A673 (cell line): ENCODE measurements at regions of chr2 and their contacts with region 1.

Region 1: DNA sequence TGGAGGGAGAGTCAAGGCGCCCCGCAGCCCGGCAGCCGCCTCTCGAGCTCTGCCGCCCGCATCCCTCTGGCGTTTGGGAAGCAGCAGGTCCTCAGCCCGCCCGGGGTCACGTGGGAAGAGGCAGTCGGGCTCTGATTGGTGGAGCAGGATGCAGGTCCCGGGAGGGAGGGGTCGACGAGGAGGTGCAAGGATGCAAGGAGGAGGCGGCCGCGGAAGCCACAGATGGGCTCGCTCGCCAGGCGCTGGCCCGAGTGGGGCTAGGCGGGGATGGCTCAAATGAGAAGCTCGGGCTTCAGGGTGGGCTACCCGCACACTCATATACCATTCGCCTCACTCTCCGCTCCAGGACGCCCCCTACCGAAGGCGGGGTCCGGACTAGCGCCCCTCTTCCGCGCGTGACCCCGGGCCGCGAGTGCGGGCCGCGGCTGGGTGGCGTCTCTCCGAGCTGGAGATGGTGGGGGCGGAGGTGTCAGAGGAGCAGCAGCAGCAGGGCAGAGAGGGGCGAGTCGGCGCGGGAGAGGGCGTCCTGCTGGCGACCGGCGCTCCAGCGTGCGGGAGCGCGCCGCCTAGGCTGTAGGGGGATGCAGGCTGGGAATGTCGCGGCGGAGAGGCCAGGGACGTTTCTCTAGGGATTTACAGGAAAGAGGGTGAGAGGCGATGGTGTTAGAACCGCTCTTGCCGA is at the start of gene TMEFF2:
- DNase-seq: peak; percentile 96
- H3K4me3 ChIP-seq: peak within 1 kb of the TSS; percentile 85
- H3K27ac ChIP-seq: no peak within 1 kb of the TSS
- H3K4me1 ChIP-seq: peaks cover 8% of the 10 kb centered on the region
- H3K27me3 ChIP-seq: no peaks in the 10 kb centered on the region
- CTCF ChIP-seq: peak; percentile 63
- total RNA-seq, gene TMEFF2: 6.0 and 7.0 TPM in 2 replicates

Region 2: GRCh38 chr2:191352536-191352935 is 842.5 kb before region 1 on chr2:
- CTCF ChIA-PET with region 1: no interaction called
- POLR2A ChIA-PET with region 1: no interaction called
- intact Hi-C with region 1: no loop called
- DNase-seq: peak; percentile 50
- H3K4me3 ChIP-seq: no peak overlapping the region
- H3K27ac ChIP-seq: no peak overlapping the region
- H3K4me1 ChIP-seq: peaks cover 16% of the 10 kb centered on the region
- H3K27me3 ChIP-seq: no peaks in the 10 kb centered on the region
- CTCF ChIP-seq: no peak

Region 3: DNA sequence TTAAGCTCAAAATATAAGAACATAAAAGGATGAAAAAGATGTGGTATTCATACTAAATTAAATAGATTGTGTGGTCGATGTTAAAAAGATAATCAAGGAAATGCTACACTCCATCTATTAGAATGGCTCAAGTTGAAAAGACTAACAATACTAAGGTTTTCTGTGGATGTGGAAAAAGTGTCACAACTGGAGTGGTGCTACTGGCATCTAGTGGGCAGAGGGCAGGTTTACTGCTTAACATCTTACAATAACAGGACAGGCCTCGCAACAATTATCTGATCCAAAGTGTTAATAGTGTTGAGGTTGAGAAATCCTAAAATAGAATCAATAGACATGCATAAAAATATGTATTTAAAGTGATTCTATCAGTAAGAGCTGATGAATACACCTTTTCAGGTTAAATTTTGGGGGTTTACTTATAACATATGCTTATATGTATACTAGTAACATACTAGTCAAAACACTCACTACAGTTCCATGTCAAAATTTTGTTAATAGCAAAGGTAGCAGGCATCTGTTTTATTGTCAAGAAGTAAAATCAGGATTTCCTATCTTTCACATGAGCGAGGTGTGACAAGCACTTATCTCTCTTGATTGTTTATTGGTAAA is 91.2 kb after region 1 on chr2:
- CTCF ChIA-PET with region 1: no interaction called
- POLR2A ChIA-PET with region 1: no interaction called
- intact Hi-C with region 1: loop called (anchors 5 kb)
- DNase-seq: peak; percentile 75
- H3K4me3 ChIP-seq: no peak overlapping the region
- H3K27ac ChIP-seq: no peak overlapping the region
- H3K4me1 ChIP-seq: no peaks in the 10 kb centered on the region
- H3K27me3 ChIP-seq: no peaks in the 10 kb centered on the region
- CTCF ChIP-seq: peak; percentile 67

Region 4: GRCh38 chr2:192559541-192560120 is 364.6 kb after region 1 on chr2:
- CTCF ChIA-PET with region 1: no interaction called
- POLR2A ChIA-PET with region 1: no interaction called
- intact Hi-C with region 1: loop called (anchors 10 kb)
- DNase-seq: no peak
- H3K4me3 ChIP-seq: no peak overlapping the region
- H3K27ac ChIP-seq: no peak overlapping the region
- H3K4me1 ChIP-seq: no peaks in the 10 kb centered on the region
- H3K27me3 ChIP-seq: no peaks in the 10 kb centered on the region
- CTCF ChIP-seq: no peak

Region 5: DNA sequence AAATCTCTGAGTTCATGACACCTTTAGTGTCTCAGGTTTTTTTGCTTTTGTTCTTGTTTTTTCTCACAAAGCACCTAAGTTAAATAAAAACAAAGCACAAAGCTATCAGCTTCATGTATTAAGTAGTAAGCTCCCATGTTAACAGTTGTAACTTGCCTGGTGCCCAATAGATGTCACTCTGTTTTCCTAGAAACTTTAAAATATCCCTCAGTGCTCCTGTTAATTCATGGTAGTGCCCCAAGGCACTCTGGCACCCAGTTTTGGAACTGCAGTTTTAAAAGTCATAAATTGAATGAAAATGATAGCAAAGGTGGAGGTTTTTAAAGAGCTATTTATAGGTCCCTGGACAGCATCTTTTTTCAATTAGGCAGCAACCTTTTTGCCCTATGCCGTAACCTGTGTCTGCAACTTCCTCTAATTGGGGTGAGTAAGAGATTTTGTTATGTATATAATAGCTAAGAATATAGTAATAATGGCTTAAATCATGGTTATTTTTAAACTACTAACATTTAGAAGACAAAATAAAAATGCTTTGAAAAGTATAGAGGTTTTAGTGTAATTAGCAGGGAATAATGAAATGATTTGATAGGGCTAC is 554.7 kb after region 1 on chr2:
- CTCF ChIA-PET with region 1: no interaction called
- POLR2A ChIA-PET with region 1: no interaction called
- intact Hi-C with region 1: loop called (anchors 10 kb)
- DNase-seq: peak; percentile 72
- H3K4me3 ChIP-seq: no peak overlapping the region
- H3K27ac ChIP-seq: no peak overlapping the region
- H3K4me1 ChIP-seq: peaks cover 16% of the 10 kb centered on the region
- H3K27me3 ChIP-seq: no peaks in the 10 kb centered on the region
- CTCF ChIP-seq: peak; percentile 71

Region 6: DNA sequence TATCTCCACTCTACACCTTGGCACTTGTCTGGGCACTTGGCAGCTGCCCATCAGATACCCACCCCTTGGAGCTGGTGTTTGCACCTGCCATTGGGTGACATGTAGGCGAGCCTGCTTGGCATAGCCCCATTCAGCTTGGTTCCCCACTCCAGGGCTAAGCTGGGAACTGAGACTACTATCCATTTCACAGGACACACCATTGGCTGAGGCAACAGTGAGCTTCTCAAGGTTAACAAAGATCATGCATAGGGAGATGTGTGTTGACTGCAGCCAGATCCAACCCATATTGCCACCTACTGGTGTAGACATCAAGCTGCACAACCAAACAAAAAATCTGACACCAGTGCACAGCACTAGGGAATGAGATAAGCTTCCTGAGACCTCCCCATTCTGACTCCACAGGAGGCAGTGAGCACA is 1389.5 kb after region 1 on chr2:
- CTCF ChIA-PET with region 1: no interaction called
- POLR2A ChIA-PET with region 1: no interaction called
- intact Hi-C with region 1: loop called (anchors 10 kb)
- DNase-seq: peak; percentile 79
- H3K4me3 ChIP-seq: no peak overlapping the region
- H3K27ac ChIP-seq: no peak overlapping the region
- H3K4me1 ChIP-seq: peaks cover 16% of the 10 kb centered on the region
- H3K27me3 ChIP-seq: no peaks in the 10 kb centered on the region
- CTCF ChIP-seq: peak; percentile 67